Cardiac septum (tissue), 1 donor: ENCODE measurements at regions of chr2 and their contacts with region 1.

Region 1: GRCh38 chr2:69643602-69644505 is at the start of gene AAK1:
- DNase-seq: peak; percentile 96
- total RNA-seq, gene AAK1: 124 TPM

Region 2: DNA sequence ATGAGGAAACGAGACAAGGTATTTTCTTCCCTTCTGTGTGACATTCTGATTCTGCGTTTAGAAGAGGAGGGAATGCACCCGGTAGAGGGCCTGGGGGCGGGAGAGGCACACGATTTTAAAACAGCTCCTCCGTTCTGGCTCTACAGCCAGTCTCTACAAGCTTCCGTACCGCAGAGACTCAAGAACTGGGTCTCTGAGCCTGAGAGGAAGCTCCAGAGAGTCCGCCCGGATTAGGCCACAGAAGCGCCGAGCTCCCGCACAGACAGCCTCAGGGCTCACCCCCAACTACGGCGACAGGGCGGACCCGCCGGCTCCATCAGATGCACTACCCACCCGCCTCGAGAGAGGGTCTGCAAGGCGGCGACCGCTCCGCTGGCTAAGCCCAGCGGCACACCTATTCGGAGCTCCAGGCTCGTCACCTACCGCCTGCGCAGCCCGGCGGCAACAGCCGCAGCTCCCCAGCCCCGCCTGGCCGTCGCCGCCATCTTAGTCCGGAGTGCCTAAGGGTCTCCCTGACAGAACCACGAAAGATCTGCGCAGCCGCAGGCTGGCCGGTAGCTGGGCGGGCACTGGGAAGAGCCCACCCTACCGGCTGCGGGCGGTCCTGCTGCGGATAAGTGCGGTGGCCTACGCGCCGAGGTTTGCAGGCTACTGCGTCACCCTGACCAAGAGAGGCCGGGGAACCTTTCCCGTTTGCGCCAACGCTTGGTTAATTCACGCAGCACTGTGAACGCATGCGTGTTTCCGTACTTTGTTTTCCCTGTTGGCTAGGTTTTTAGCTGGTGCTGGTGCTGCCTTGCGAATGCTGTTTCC is 206.7 kb before region 1 on chr2 and contains the start of gene NFU1:
- intact Hi-C with region 1: loop called (anchors 2 kb)
- DNase-seq: peak; percentile 95
- total RNA-seq, gene NFU1: 90.3 TPM

Region 3: DNA sequence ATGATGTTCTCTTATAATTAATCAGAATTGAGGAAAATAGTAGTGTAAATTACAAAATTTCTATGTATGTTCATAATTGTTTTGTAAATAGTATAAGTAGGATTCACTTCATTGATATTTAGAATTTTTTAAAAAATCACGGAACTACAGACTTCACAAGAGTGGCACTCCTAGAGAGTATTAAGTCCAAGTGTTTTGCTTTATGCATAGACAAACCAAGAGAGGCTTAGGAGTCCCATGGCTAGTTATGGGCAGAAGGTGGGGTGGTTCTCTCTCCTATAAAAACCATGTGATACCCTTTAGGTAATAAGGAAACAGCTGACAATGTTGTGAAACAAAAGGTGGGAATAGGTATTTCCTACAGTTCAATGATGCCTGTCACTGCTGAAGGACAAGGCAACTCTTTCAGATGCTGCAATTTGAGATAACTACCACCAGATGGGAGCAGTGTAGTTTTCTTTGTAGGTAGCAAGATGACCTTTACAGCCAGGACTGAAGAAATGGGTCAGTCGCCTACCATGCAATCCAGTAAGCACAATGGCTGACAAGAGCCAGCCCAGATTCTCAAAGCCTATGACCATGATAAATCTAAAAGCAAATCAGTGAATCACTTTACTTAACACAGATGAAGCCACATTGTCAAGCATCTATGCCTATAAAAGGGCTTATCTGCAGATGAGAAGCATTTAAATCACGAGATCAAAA is 84.3 kb before region 1 on chr2:
- intact Hi-C with region 1: loop called (anchors 2 kb)
- DNase-seq: no peak

Region 4: DNA sequence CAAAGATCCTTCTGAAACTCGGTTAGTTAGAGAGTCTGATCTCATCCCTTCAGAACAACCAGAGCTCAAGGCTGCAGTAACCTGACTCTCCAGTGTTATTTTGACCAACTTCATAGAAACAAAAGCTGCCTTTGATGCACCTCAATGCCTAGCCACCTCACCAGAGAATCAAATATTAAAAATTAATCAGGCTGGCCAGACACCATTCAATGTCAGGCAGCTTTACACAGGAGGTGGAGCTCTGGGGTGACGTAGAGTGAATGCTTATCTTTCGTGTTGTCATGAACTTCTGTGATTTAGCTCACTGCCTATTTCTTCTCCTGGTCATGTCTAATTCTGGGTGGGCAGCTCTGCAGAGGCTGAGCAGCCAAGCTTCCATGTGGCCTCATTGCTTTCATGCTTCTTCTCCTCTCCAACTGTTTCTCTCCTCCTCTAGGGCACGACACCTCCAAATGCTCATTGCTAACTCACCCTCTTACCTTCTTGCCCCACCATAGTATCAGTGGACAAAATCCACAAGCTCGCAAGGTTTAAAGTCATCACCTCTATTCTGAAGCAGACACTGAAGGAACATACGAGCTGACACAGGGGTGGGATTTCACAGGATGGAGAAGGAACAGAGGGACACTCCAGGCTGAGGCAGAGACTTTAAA is 39.7 kb before region 1 on chr2:
- intact Hi-C with region 1: loop called (anchors 2 kb)
- DNase-seq: no peak

Region 5: GRCh38 chr2:69683101-69683971 is 39.5 kb after region 1 on chr2:
- intact Hi-C with region 1: loop called (anchors 5 kb)
- DNase-seq: no peak

Region 6: DNA sequence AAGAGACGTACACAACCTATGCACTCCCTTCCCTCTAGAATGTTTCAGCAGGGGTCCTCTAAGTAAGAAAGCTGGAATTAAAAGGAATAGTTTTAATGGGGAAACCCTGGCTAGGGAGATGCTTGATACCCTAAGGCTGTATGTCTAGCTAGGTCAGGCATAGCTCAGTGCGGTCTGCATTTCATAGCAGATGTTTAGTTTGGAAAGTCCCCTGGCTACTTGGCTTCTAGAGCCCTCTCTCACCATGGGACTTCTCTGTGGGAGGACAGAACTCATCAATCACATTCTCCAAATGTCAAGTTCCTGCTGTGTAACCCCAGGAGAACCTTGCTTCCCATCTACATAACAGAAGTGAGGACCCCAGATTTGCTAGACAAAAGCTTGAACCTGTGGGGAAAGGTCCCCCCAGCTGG is 74.0 kb after region 1 on chr2:
- intact Hi-C with region 1: loop called (anchors 5 kb)
- DNase-seq: no peak

Region 7: GRCh38 chr2:69798909-69799526 is 155.2 kb after region 1 on chr2:
- intact Hi-C with region 1: no loop called
- DNase-seq: no peak

Region 8: DNA sequence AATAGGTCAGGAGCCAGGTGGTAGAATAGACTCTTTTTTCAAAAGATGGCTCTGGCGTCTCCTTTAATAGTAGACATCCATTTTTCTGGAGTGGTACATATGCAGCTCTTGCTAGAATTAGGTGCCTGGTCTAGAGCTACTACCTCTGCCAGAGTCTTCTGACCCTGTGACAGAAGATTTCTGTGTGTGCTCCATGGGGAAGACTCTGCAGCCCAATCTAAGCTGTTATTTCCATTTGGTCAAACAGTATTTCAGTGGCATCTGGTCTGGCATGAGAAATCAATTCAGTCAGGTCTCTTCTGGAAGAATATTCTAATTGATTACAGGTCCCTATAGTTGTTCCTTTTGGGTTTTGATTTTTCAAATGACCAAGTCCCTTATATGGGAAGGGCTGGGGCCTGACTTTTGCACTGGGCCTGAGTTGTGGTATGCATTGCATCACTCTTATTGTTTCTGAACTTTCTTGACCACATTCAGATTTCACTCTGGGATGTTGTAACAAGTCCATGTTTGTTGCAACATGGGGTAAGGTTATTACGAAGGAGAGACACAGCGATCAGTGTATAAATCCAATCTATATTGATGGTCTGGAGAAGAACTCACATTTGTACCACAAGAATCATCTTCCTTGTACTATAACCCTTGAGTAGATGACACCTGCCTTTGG is 283.1 kb after region 1 on chr2:
- intact Hi-C with region 1: no loop called
- DNase-seq: no peak